GM10248 (cell line): ENCODE measurements at regions of chr3 and their contacts with region 1.

Region 1: GRCh38 chr3:46496741-46497554 is 828 bp upstream of the RTP3 start:
- DNase-seq: peak; percentile 46
- CTCF ChIP-seq: peak; percentile 44

Region 2: DNA sequence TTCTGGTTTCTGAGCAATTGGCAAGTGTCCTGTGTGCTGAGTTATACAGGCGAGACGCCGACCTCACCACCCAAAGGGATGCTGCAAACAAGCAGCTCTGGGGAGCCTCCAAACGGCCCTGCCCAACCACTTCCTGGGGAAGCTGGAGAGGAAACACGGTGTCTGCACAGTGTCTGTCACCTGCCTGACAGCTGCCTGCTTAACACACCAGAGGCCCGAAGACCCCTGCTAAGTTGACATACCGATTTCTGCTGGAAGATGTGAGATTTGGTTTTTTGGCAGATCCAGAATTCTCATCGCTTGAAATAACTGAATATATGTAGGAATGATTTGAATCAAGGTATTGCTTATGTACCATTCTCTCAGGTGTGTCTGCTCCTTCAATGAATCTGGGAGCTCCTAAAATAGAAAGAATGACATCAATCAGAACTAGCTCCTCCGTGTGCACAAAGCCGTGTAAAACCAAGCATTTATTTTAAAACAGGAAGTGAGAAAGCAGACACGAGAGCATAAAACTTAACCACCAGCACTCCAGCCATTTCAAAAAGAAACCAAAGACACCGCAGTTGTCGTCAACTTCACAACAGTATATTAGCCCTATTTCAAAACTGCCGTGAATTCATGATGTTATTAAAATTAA is 42.0 kb after region 1 on chr3:
- CTCF ChIA-PET with region 1: interaction called, 13 read pairs
- POLR2A ChIA-PET with region 1: no interaction called
- DNase-seq: peak; percentile 75
- CTCF ChIP-seq: no peak

Region 3: GRCh38 chr3:46558184-46559043 is 61.5 kb after region 1 on chr3:
- CTCF ChIA-PET with region 1: interaction called, 34 read pairs
- POLR2A ChIA-PET with region 1: no interaction called
- DNase-seq: peak; percentile 82
- CTCF ChIP-seq: peak; percentile 88

Region 4: DNA sequence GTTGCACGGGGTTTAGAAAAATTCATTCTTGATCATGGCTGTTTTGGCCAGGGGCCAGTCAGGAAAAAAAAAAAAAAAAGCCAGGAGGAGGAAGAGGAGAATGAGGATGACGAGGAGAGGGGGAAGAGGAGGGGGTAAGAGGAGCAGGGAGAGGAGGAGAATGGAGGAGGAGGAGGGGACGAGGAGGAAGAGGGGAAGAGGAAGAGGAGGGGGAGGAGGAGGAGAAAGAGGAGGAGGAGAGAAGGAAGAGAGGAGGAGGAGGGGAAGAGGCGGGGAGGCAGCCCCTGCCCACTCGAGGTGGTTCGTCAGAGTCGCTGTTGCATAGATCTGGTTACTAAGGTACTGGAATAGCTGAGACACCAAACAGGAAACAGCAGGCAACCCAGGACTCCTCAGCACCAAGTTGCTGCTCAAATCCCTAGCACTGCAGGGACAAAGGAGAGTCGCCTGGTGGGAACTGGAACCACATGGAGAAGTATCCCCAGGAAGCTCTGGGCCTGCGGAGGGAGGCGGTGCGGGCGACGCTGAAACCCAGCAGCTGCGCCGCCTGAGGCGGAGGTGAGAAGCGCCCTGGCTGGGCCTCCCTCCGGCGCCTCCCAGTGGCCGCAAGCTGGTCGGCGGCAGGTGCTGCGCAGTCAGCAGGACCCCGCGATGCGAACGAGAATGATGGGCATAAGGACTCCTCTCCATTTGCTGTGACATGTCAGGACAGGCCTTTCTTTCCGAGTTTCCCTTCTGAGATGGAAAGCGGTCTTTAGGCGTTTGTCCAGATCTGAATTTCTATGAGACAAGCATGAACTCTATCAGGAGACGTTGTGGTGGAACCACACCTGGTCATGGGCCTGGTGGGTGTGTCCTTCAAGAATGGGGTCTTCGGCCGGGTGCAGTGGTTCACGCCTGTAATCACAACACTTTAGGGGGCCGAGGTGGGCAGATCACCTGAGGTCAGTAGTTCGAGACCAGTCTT is 132.9 kb after region 1 on chr3:
- CTCF ChIA-PET with region 1: interaction called, 168 read pairs
- POLR2A ChIA-PET with region 1: no interaction called
- DNase-seq: peak; percentile 86
- CTCF ChIP-seq: peak; percentile 97